ENCODE measurements at regions of chr15 and their contacts with region 1.

Region 1: GRCh38 chr15:73633111-73633990 is at the start of gene NPTN:
- DNase-seq: peak; percentile 98
- H3K4me3 Mint-ChIP-seq: peak within 1 kb of the TSS; percentile 86
- H3K27ac Mint-ChIP-seq: peak within 1 kb of the TSS; percentile 80
- H3K4me1 Mint-ChIP-seq: peaks cover 42% of the 10 kb centered on the region
- H3K27me3 Mint-ChIP-seq: peaks cover 27% of the 10 kb centered on the region
- total RNA-seq, gene NPTN: 41.4 to 50.6 TPM

Region 2: GRCh38 chr15:73403171-73403570 is 230.2 kb before region 1 on chr15:
- CTCF ChIA-PET with region 1: no interaction called
- POLR2A ChIA-PET with region 1: no interaction called
- DNase-seq: no peak
- H3K4me3 Mint-ChIP-seq: no peak overlapping the region
- H3K27ac Mint-ChIP-seq: no peak overlapping the region
- H3K4me1 Mint-ChIP-seq: no peaks in the 10 kb centered on the region
- H3K27me3 Mint-ChIP-seq: peaks cover 14% of the 10 kb centered on the region

Region 3: GRCh38 chr15:73569370-73569769 is 64.0 kb before region 1 on chr15:
- CTCF ChIA-PET with region 1: interaction called, 10 read pairs
- POLR2A ChIA-PET with region 1: no interaction called
- DNase-seq: no peak
- H3K4me3 Mint-ChIP-seq: no peak overlapping the region
- H3K27ac Mint-ChIP-seq: no peak overlapping the region
- H3K4me1 Mint-ChIP-seq: peaks cover 19% of the 10 kb centered on the region
- H3K27me3 Mint-ChIP-seq: no peaks in the 10 kb centered on the region

Region 4: DNA sequence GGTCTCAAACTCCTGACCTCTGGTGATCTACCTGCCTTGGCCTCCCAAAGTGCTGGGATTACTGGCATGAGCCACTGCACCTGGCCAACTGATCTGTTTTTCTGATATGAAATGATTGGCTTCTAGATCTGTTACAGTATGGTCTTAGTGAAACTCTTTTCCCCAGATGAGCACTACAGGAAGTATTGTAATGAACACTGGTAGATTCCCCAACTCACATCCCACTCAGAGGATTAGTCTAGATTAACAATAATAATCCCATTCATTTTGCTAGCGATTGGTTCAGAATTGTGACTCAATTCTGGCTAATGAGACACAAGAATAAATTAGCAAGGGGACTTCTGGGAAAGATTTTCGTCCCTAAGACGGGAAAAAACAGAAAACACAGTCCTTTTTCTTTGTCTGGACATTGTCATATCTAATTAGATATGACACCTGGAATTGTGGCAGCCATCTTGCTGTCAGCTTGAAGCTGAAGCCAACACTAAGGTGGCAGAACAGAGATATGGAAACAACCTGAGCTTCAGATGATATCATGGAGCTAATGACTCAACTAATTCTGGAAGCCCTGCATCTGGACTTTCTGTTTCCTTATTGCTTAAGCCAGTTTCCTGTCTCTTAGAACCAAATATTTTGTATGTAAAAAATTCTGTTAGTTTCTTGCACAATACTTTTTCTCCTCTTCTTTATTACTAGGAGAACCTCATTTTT is 17.2 kb after region 1 on chr15:
- CTCF ChIA-PET with region 1: interaction called, 24 read pairs
- POLR2A ChIA-PET with region 1: no interaction called
- DNase-seq: no peak
- H3K4me3 Mint-ChIP-seq: no peak overlapping the region
- H3K27ac Mint-ChIP-seq: no peak overlapping the region
- H3K4me1 Mint-ChIP-seq: peaks cover 2% of the 10 kb centered on the region
- H3K27me3 Mint-ChIP-seq: peaks cover 15% of the 10 kb centered on the region

Region 5: GRCh38 chr15:73697033-73697467 is 63.7 kb after region 1 on chr15:
- CTCF ChIA-PET with region 1: interaction called, 94 read pairs
- POLR2A ChIA-PET with region 1: no interaction called
- DNase-seq: peak; percentile 86
- H3K4me3 Mint-ChIP-seq: no peak overlapping the region
- H3K27ac Mint-ChIP-seq: no peak overlapping the region
- H3K4me1 Mint-ChIP-seq: peaks cover 42% of the 10 kb centered on the region
- H3K27me3 Mint-ChIP-seq: peaks cover 58% of the 10 kb centered on the region

Region 6: DNA sequence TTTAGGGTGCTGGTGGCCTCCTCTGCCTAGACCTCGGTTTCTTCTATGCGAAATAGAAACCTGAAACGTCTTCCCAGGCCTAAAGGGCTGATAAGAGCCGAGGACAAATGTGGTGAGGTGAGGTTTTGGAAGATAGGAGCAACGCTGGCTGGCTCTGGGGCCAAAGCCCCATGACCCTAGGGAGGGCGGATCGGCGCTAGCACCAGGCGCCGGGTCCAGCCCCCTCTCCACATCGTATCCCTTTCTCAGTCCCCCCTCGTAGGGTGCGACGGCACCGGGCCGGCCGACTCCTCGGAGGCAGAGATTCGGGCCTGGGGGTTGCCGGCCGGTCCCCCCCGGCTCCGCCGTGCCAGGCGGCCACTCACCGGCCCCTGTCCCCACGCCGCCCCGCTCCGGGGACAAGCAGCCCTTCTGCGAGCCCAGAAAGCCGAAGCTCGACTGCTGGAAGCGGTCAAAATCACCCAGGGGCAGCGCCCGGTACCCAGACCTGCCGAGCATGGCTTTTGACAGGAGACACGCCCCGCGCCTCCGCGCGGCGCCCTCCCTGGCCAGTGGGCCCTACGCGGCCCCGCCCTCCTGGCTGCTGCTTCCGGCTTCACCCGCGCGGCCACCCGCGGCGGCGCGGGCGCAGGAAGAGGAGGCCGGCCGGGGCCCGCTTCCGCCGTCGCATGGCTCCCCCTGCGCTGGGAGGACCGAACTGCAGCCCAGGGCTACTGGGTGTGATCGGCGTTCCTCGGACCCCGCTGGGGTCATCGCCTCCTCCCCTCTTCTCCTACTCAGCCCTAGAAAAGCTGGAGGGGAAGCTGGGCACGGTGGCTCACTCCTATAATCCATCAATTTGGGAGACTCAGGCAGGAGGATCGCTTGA is 358.6 kb after region 1 on chr15 and contains the start of gene STOML1:
- CTCF ChIA-PET with region 1: no interaction called
- POLR2A ChIA-PET with region 1: no interaction called
- DNase-seq: peak; percentile 92
- H3K4me3 Mint-ChIP-seq: peak within 1 kb of the TSS; percentile 78
- H3K27ac Mint-ChIP-seq: peak within 1 kb of the TSS; percentile 93
- H3K4me1 Mint-ChIP-seq: peaks cover 50% of the 10 kb centered on the region
- H3K27me3 Mint-ChIP-seq: no peaks in the 10 kb centered on the region
- total RNA-seq, gene STOML1: 12.0 to 12.8 TPM